B cell (primary cell): ENCODE measurements at regions of chr12 and their contacts with region 1.

Region 1: DNA sequence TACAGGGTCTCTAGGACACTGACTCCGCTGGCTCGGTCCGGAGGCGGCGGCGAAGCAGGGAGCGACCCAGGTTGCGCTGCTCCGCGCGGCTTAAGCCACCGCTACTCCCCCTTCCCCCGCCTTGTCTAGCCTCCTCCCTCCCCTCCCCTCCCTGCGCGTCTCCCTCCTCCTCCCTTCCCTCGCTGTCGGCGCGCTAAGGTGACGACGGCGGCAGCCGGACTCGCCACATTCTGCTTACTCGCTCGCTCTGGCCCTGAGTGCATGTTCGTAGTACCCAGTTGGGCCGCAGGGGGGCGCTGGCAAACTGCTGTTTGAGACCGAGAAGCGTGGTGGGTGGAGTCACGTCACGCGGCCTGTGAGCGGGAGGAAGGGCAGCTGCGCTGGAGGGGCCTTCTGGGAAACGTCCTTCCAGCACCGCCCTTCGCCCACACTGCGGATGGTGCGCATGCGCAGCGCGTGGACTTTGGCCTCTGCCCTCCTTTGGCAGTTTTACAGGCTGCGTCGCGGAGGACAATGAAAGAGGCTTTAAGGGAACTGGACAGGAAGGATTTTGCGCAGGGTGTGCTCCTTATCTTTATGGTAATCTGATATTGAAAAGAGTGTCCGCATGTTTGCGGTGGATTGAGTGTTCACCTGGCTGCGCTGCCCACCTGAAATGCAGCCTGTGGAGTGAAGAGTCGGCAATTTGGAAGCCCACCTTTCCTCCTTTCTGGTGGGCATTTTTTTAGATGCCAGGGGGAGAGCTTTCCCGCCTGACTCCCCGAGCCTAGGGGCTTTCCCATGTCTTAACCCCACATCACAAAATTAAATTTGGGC is at the start of gene SCAF11:
- DNase-seq: peak; percentile 100
- ATAC-seq: peak; percentile 86
- H3K4me3 ChIP-seq: peak within 1 kb of the TSS; percentile 83 to 100 (median 95)
- H3K4me3 Mint-ChIP-seq: peak within 1 kb of the TSS; percentile 97
- H3K27ac ChIP-seq: peak within 1 kb of the TSS; percentile 93 to 98
- H3K27ac Mint-ChIP-seq: peak within 1 kb of the TSS; percentile 99
- H3K4me1 ChIP-seq: peaks cover 37 to 38% of the 10 kb centered on the region in 2 donors
- H3K4me1 Mint-ChIP-seq: peaks cover 44% of the 10 kb centered on the region
- H3K27me3 ChIP-seq: no peaks in the 10 kb centered on the region
- H3K27me3 Mint-ChIP-seq: no peaks in the 10 kb centered on the region
- CTCF ChIP-seq: peak; percentile 83
- total RNA-seq, gene SCAF11: 247 and 272 TPM in 2 replicates

Region 2: GRCh38 chr12:45728630-45729232 is 261.9 kb before region 1 on chr12:
- CTCF ChIA-PET with region 1: interaction called, 4 read pairs
- POLR2A ChIA-PET with region 1: interaction called, 4 read pairs
- intact Hi-C with region 1: loop called (anchors 1 kb)
- DNase-seq: peak; percentile 98
- ATAC-seq: peak; percentile 68
- H3K4me3 ChIP-seq: peak overlapping the region; percentile 87 to 98 (median 95)
- H3K4me3 Mint-ChIP-seq: peak overlapping the region; percentile 100
- H3K27ac ChIP-seq: peak overlapping the region; percentile 98 to 99
- H3K27ac Mint-ChIP-seq: peak overlapping the region; percentile 99
- H3K4me1 ChIP-seq: peaks cover 16 to 38% of the 10 kb centered on the region in 2 donors
- H3K4me1 Mint-ChIP-seq: peaks cover 36% of the 10 kb centered on the region
- H3K27me3 ChIP-seq: no peaks in the 10 kb centered on the region
- H3K27me3 Mint-ChIP-seq: no peaks in the 10 kb centered on the region
- CTCF ChIP-seq: peak; percentile 93

Region 3: DNA sequence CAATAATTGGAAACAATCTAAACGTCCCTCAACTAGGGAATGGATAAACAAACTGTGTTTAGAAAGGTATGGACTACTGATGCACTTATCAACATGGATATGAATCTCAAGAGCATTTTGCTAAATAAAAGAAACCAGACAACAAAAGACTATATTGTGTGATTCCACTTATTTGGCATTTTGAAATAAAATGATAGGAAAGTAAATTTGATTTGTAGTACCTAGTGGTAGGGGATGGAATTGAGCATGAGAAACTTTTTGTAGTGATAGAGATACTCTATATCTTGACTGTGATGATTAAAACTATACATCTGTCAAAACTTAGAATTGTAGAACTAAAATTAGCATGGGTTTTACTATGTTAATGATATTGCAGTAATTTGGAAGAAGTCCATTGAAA is 174.0 kb before region 1 on chr12:
- CTCF ChIA-PET with region 1: no interaction called
- POLR2A ChIA-PET with region 1: no interaction called
- intact Hi-C with region 1: no loop called
- DNase-seq: no peak
- ATAC-seq: no peak
- H3K4me3 ChIP-seq: no peak overlapping the region
- H3K4me3 Mint-ChIP-seq: no peak overlapping the region
- H3K27ac ChIP-seq: no peak overlapping the region
- H3K27ac Mint-ChIP-seq: no peak overlapping the region
- H3K4me1 ChIP-seq: no peaks in the 10 kb centered on the region
- H3K4me1 Mint-ChIP-seq: no peaks in the 10 kb centered on the region
- H3K27me3 ChIP-seq: no peaks in the 10 kb centered on the region
- H3K27me3 Mint-ChIP-seq: no peaks in the 10 kb centered on the region
- CTCF ChIP-seq: no peak

Region 4: DNA sequence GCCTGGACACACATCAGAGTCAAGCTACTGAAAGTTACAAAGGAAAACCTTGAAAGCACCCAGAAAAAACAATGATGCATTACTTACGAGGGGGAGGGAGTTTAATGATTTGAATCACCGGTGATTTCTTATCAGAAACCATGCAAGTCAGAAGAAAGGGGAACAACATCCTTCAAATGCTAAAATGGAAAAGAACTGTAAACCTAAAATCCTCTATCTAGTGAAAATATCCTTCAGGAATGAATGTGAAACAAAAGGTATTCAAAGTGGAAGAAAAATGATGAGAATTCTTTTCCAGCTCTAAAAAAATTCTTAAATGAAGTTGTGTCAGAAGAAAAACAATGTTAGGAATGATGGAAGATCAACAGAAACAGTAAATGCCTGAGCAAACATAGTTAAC is 17.1 kb before region 1 on chr12:
- CTCF ChIA-PET with region 1: interaction called, 4 read pairs
- POLR2A ChIA-PET with region 1: no interaction called
- intact Hi-C with region 1: loop called (anchors 1 kb)
- DNase-seq: peak; percentile 42
- ATAC-seq: no peak
- H3K4me3 ChIP-seq: no peak overlapping the region
- H3K4me3 Mint-ChIP-seq: peak overlapping the region; percentile 57
- H3K27ac ChIP-seq: peak overlapping the region; percentile 31 to 75
- H3K27ac Mint-ChIP-seq: peak overlapping the region; percentile 37
- H3K4me1 ChIP-seq: peaks cover 15 to 48% of the 10 kb centered on the region in 2 donors
- H3K4me1 Mint-ChIP-seq: peaks cover 78% of the 10 kb centered on the region
- H3K27me3 ChIP-seq: no peaks in the 10 kb centered on the region
- H3K27me3 Mint-ChIP-seq: no peaks in the 10 kb centered on the region
- CTCF ChIP-seq: no peak

Region 5: DNA sequence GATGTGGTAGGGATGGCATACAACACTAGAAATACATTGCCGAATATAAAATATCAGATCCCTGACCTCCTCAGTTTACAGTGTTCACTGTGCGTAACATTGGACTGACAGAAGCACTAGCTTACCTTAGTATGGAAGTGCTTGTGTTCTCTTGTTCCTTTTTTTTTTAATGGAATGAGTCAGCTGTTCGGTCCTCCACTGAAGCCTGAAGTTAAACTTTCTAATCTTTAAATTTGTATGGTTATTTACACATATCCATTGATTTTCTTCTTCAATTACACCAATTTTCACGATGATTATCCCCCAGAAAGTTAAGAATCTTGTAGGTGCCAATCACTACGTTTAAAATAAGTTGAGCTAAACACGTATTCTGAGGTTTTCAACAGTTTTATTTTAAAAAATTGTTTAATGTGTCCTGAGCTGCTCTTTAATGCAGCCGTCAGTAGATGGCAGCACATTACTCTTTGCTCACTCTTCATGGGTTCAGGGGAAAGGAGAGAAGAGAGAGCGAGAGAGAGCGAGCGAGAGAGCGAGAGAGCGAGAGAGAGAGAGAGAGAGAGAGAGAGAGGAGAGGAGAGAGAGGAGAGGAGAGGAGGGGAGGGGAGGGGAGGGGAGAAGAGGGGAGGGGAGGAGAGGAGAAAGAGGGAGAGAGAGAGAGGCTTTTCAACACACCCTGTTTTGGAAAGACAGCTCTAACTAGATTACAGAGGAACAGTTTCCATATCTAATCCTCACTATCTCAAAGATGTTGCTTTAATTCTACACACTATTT is 134.4 kb after region 1 on chr12:
- CTCF ChIA-PET with region 1: interaction called, 10 read pairs
- POLR2A ChIA-PET with region 1: no interaction called
- intact Hi-C with region 1: no loop called
- DNase-seq: peak; percentile 74
- ATAC-seq: peak; percentile 86
- H3K4me3 ChIP-seq: peak overlapping the region in 1 of 5 experiments; percentile 6
- H3K4me3 Mint-ChIP-seq: peak overlapping the region; percentile 62
- H3K27ac ChIP-seq: no peak overlapping the region
- H3K27ac Mint-ChIP-seq: peak overlapping the region; percentile 84
- H3K4me1 ChIP-seq: peaks cover 3 to 4% of the 10 kb centered on the region in 2 donors
- H3K4me1 Mint-ChIP-seq: peaks cover 5% of the 10 kb centered on the region
- H3K27me3 ChIP-seq: no peaks in the 10 kb centered on the region
- H3K27me3 Mint-ChIP-seq: peaks cover 10% of the 10 kb centered on the region
- CTCF ChIP-seq: peak; percentile 77

Region 6: GRCh38 chr12:46303039-46303666 is 312.5 kb after region 1 on chr12:
- CTCF ChIA-PET with region 1: interaction called, 3 read pairs
- POLR2A ChIA-PET with region 1: no interaction called
- intact Hi-C with region 1: loop called (anchors 1 kb)
- DNase-seq: peak; percentile 73
- ATAC-seq: peak; percentile 71
- H3K4me3 ChIP-seq: no peak overlapping the region
- H3K4me3 Mint-ChIP-seq: no peak overlapping the region
- H3K27ac ChIP-seq: no peak overlapping the region
- H3K27ac Mint-ChIP-seq: peak overlapping the region; percentile 28
- H3K4me1 ChIP-seq: peaks cover 19 to 20% of the 10 kb centered on the region in 2 donors
- H3K4me1 Mint-ChIP-seq: peaks cover 29% of the 10 kb centered on the region
- H3K27me3 ChIP-seq: no peaks in the 10 kb centered on the region
- H3K27me3 Mint-ChIP-seq: no peaks in the 10 kb centered on the region
- CTCF ChIP-seq: peak; percentile 72

Region 7: DNA sequence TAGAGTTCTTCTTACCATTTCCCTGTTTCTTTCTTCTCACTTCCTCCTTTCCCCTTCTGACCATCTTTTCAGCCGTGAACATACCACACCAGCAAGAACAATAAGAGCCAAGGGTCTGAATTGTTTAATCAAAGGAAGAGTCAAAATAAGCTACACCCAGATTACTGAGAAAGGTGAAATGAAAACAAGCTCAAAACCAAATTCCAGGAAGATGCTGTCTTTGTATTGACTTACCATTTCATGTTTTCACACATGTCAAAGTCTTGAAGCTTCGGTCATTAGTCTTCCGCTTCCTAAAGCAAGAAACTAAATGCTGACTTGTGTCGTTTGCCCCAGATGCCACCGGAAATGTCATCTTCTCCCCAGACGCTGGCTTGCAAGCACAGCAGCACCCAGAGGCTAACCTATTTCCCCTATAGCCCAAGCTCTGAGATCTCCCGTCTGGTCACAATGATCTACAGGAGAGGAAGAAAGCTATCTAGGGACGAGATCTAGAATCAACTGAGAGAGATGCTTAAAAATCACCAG is 1225.5 kb after region 1 on chr12:
- CTCF ChIA-PET with region 1: no interaction called
- POLR2A ChIA-PET with region 1: no interaction called
- intact Hi-C with region 1: loop called (anchors 5 kb)
- DNase-seq: peak; percentile 88
- ATAC-seq: peak; percentile 85
- H3K4me3 ChIP-seq: peak overlapping the region; percentile 56 to 80 (median 60)
- H3K4me3 Mint-ChIP-seq: peak overlapping the region; percentile 90
- H3K27ac ChIP-seq: peak overlapping the region; percentile 78 to 89
- H3K27ac Mint-ChIP-seq: peak overlapping the region; percentile 92
- H3K4me1 ChIP-seq: peaks cover 63 to 73% of the 10 kb centered on the region in 2 donors
- H3K4me1 Mint-ChIP-seq: peaks cover 56% of the 10 kb centered on the region
- H3K27me3 ChIP-seq: no peaks in the 10 kb centered on the region
- H3K27me3 Mint-ChIP-seq: no peaks in the 10 kb centered on the region
- CTCF ChIP-seq: no peak